ENCODE measurements at regions of chr6 and their contacts with region 1.

Region 1: GRCh38 chr6:34248727-34249551 is at the start of gene SMIM29:
- DNase-seq: peak; percentile 96 to 98
- H3K4me3 ChIP-seq: peak within 1 kb of the TSS; percentile 84 to 91
- H3K27ac ChIP-seq: peak within 1 kb of the TSS; percentile 92 to 95
- H3K4me1 ChIP-seq: peaks cover 8 to 10% of the 10 kb centered on the region in 2 donors
- H3K27me3 ChIP-seq: no peaks in the 10 kb centered on the region
- CTCF ChIP-seq: peak; percentile 95 to 97 (median 97)
- POLR2A ChIP-seq: peak; percentile 68 to 83
- total RNA-seq, gene SMIM29: 5.2 to 44.3 (median 20.0) TPM

Region 2: DNA sequence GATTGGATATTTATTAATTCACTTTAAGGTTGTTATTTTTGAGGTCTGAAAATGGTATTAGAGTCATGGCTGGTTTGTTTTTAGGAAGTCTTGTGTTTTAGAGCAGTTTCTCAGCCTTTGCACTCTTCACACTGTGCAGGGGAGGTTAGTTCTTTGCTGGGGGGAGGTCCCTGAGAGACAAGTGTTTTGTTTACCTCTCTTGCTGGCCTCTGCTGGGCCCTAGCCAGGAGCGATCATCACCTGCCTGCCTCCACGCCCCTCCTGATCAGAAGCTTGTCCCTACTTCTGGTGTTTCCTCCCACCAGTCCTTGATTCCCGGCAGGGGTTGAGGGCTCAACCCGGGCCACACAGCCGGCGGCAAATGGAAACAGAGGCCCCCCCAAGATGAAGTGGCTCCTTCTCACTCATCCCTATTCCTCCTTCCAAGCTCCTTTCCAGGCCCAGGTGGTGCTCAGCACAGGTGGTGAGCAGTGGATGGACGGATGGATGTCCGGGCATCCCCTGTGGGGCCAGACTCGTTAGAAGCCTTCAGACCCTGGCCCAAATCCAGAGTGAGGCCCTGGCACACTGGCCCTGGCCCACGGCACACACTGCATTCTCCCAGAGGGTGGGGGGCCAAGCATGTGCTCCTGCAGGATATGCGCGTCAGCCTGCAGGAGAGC is 154.3 kb before region 1 on chr6:
- intact Hi-C with region 1: no loop called
- DNase-seq: no peak
- H3K4me3 ChIP-seq: no peak overlapping the region
- H3K27ac ChIP-seq: no peak overlapping the region
- H3K4me1 ChIP-seq: no peaks in the 10 kb centered on the region
- H3K27me3 ChIP-seq: peaks cover 0 to 3% of the 10 kb centered on the region in 2 donors
- CTCF ChIP-seq: no peak
- POLR2A ChIP-seq: no peak

Region 3: DNA sequence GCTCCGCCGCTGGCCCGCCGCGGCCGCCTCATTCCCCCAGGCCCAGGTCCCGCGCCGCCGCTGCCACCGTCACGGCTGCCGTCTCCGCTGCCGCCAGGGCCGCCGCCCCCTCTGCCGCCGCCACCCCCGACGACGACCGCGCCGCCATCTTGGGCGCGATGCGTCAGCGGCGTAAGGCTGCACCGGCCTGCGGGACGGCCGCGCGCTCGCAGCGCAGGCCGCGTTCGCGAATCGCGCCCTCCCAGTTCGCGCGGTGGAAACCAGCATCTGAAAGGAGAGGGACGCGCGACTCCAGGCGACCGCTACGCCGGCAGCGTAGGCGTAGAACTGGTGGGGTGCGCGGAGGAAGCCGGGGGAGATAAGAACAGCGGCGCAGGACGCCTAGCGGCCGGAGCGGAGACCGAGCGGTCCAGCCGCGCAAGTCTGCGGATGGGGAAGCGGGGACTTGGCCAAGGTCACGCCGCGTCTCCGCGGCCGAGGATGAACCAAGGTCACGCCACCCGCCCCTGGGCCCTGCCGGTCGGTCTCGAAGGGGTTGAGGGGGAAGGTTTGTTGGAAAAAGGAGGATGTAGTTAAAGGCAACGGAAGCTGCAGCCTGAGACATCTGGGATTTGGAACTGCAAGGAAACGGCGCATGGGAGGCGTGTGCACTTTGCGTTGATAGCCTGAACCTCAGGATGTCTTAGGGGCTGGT is 143.7 kb after region 1 on chr6 and contains the start of gene NUDT3:
- intact Hi-C with region 1: loop called (anchors 5 kb)
- DNase-seq: peak; percentile 94 to 96
- H3K4me3 ChIP-seq: peak within 1 kb of the TSS; percentile 58 to 96
- H3K27ac ChIP-seq: peak within 1 kb of the TSS; percentile 94 to 96
- H3K4me1 ChIP-seq: peaks cover 0 to 7% of the 10 kb centered on the region in 2 donors
- H3K27me3 ChIP-seq: no peaks in the 10 kb centered on the region
- CTCF ChIP-seq: peak; percentile 73 to 95 (median 89)
- POLR2A ChIP-seq: peak; percentile 59 to 85
- total RNA-seq, gene NUDT3: 15.6 to 58.8 (median 38.2) TPM

Region 4: DNA sequence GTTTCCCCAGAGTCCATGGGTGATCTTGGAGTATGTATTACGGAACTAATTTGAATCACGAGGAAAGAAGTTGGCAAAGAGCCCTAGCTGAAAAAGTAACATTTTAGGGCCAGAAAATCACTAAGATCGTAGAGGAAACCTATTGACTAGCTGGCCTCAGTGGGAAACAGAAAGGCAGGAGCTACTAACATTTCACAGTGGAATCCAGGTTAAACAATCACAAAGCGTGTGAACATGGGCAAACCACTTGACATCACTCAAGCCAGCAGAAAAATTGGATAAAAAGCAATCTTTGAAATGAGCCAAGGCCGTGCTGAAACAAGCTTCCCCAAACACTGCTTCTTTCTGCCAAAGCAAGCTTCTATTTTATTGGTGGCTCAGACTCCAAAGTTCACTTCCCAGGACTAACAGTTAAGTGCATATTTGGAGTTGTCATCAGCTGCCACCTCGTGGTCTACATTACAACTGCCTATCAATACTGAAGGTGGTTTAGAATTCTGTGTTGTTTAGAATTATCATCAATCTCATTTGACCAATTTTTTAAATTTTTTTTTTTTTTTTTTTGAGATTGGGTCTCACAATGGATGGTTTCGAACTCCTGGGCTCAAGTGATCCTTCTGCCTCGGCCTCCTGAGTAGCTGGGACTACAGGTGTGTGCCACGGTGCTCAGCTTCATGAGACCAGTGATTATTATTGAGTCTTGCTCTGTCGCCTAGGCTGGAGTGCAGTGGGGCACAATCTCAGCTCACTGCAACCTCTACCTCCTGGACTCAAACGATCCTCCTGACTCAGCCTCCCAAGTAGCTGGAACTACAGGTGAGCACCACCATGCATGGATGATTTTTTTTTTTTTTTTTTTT is 166.3 kb after region 1 on chr6:
- intact Hi-C with region 1: loop called (anchors 5 kb)
- DNase-seq: peak; percentile 42 to 63
- H3K4me3 ChIP-seq: no peak overlapping the region
- H3K27ac ChIP-seq: peak overlapping the region; percentile 67 to 78
- H3K4me1 ChIP-seq: peaks cover 0 to 6% of the 10 kb centered on the region in 2 donors
- H3K27me3 ChIP-seq: no peaks in the 10 kb centered on the region
- CTCF ChIP-seq: peak; percentile 60 to 89 (median 74)
- POLR2A ChIP-seq: no peak